Sigmoid colon (tissue), 7 donors: ENCODE measurements at regions of chr20 and their contacts with region 1.

Region 1: GRCh38 chr20:37333848-37334318 is 12.1 kb upstream of the SRC start:
- DNase-seq: no peak
- H3K4me3 ChIP-seq: no peak overlapping the region
- H3K27ac ChIP-seq: peak overlapping the region in 3 of 4 donors; percentile 84 to 87 (median 87)
- H3K4me1 ChIP-seq: peaks cover 0 to 67% (median 52%) of the 10 kb centered on the region in 4 donors
- H3K27me3 ChIP-seq: no peaks in the 10 kb centered on the region
- CTCF ChIP-seq: no peak
- EP300 ChIP-seq: no peak
- POLR2A ChIP-seq: no peak

Region 2: GRCh38 chr20:37276494-37277252 is 57.2 kb before region 1 on chr20:
- intact Hi-C with region 1: no loop called
- DNase-seq: peak; percentile 86
- H3K4me3 ChIP-seq: no peak overlapping the region
- H3K27ac ChIP-seq: peak overlapping the region; percentile 38 to 63 (median 48)
- H3K4me1 ChIP-seq: peaks cover 5 to 14% (median 12%) of the 10 kb centered on the region in 4 donors
- H3K27me3 ChIP-seq: no peaks in the 10 kb centered on the region
- CTCF ChIP-seq: peak in 1 of 4 experiments; percentile 22
- EP300 ChIP-seq: no peak
- POLR2A ChIP-seq: no peak

Region 3: GRCh38 chr20:37297066-37297736 is 36.7 kb before region 1 on chr20:
- intact Hi-C with region 1: loop called (anchors 2 kb)
- DNase-seq: peak; percentile 80
- H3K4me3 ChIP-seq: no peak overlapping the region
- H3K27ac ChIP-seq: peak overlapping the region; percentile 74 to 98 (median 89)
- H3K4me1 ChIP-seq: peaks cover 0 to 83% (median 69%) of the 10 kb centered on the region in 4 donors
- H3K27me3 ChIP-seq: no peaks in the 10 kb centered on the region
- CTCF ChIP-seq: no peak
- EP300 ChIP-seq: peak in 2 of 4 donors; percentile 64 to 74
- POLR2A ChIP-seq: no peak

Region 4: DNA sequence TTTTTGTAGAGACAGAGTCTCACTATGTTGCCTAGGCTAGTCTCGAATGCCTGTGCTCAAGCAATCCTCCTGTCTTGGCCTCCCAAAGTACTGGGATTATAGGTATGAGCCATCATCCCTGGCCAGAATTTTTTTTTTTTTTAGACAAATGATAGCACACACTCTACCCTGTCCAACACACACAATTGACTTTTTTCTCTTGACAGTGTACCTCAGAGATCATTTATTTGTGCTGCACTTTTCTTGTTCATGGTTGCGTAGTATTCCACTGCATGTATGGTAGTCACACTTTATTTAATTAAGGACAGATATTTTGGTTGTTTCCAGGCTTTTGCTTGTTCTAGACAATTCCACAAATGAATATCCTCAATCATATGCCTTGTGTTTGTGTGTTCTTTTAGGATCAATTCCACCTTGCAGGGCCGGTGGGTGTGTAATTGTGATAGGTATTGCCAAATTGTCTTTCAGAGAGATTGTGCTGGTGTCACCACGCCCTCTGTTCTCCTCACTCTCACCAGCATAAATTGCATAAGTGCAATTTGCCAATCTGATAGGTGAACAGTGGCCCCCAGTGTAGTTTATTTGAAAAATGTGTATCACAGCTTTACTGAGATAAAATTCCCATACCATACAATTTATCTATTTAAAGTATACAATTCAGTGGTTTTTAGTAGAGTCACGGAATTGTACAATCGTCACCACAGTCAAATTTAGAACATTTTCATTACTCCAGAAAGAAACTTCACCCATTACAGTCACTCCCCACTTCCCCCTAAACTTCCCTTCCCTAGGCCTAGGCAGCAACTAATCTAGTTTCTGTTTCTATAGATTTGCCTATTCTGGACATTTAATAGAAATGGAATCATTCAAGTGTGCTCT is 32.1 kb after region 1 on chr20:
- intact Hi-C with region 1: no loop called
- DNase-seq: peak; percentile 26
- H3K4me3 ChIP-seq: no peak overlapping the region
- H3K27ac ChIP-seq: peak overlapping the region in 2 of 4 donors; percentile 1 to 31
- H3K4me1 ChIP-seq: peaks cover 0 to 25% (median 15%) of the 10 kb centered on the region in 4 donors
- H3K27me3 ChIP-seq: no peaks in the 10 kb centered on the region
- CTCF ChIP-seq: no peak
- EP300 ChIP-seq: no peak
- POLR2A ChIP-seq: no peak